ENCODE measurements at regions of chr10 and their contacts with region 1.

Region 1: DNA sequence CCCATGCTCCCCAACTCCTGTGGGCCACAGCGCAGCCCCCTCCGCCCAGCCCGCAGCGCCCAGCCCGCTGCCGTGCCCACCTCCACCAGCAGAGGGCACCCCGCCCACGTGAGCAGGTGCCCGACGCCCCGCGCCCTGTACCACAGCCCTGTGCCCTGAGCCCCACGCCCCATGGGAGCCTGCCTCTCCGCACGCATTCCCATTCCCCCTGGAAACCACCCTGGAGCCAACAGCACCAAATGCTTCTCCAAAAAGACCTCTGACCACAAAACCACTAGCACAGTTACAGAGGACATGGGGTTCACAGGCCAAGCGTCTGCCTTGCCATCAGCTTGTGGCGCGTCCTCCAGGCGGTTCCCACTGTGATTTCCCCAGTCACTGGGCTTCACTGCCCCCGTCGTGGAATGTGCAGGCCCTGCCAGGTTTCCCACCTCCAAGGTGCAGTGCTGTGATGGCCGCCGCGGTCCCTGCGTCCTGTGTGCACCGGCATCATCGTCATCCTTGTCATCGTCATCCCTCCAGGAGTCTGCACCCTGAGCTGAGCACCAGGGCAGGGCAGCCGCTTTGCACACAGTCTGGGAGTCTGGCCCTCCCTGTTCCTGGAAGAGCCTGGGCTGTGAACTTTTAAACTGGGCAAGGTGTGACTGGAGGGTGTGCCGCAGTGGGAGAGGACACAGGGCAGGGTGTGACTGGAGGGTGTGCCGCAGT is 61.7 kb downstream of the PWWP2B start:
- DNase-seq: peak; percentile 58 to 76 (median 70)
- ATAC-seq: peak; percentile 65 to 78 (median 76)
- H3K4me3 ChIP-seq: no peak overlapping the region
- H3K27ac ChIP-seq: no peak overlapping the region
- H3K4me1 ChIP-seq: peaks cover 0 to 16% (median 5%) of the 10 kb centered on the region in 4 donors
- H3K27me3 ChIP-seq: no peaks in the 10 kb centered on the region
- CTCF ChIP-seq: peak; percentile 90 to 95 (median 92)
- POLR2A ChIP-seq: no peak

Region 2: GRCh38 chr10:131960631-131961046 is 498.1 kb before region 1 on chr10:
- intact Hi-C with region 1: no loop called
- DNase-seq: no peak
- ATAC-seq: peak in 1 of 4 donors; percentile 13
- H3K4me3 ChIP-seq: no peak overlapping the region
- H3K27ac ChIP-seq: no peak overlapping the region
- H3K4me1 ChIP-seq: no peaks in the 10 kb centered on the region
- H3K27me3 ChIP-seq: no peaks in the 10 kb centered on the region
- CTCF ChIP-seq: no peak
- POLR2A ChIP-seq: no peak

Region 3: DNA sequence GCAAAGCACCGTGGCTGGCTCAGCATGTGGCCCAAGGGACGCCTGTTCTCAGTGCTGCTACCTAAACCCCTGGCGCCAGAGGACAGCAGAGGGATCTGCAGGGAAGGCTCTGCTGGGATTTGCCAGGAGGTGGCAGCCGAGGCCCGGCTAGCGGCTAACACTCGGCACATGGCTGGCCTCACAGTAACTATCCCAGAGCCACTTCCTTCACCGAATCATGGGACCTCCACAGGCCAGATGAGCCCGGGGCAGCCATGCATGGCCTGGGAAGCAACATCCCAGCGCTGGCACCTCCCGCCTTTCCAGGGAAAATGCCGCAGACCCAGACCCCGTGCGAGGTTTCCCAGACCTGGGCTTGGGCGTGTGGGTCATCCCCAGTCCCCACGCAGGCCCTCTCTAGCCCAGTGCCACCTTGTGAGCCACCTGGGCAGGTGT is 235.6 kb before region 1 on chr10:
- intact Hi-C with region 1: loop called (anchors 5 kb)
- DNase-seq: peak; percentile 80 to 84 (median 83)
- ATAC-seq: peak; percentile 93 to 99 (median 97)
- H3K4me3 ChIP-seq: no peak overlapping the region
- H3K27ac ChIP-seq: no peak overlapping the region
- H3K4me1 ChIP-seq: no peaks in the 10 kb centered on the region
- H3K27me3 ChIP-seq: no peaks in the 10 kb centered on the region
- CTCF ChIP-seq: peak; percentile 93 to 97 (median 94)
- POLR2A ChIP-seq: no peak

Region 4: DNA sequence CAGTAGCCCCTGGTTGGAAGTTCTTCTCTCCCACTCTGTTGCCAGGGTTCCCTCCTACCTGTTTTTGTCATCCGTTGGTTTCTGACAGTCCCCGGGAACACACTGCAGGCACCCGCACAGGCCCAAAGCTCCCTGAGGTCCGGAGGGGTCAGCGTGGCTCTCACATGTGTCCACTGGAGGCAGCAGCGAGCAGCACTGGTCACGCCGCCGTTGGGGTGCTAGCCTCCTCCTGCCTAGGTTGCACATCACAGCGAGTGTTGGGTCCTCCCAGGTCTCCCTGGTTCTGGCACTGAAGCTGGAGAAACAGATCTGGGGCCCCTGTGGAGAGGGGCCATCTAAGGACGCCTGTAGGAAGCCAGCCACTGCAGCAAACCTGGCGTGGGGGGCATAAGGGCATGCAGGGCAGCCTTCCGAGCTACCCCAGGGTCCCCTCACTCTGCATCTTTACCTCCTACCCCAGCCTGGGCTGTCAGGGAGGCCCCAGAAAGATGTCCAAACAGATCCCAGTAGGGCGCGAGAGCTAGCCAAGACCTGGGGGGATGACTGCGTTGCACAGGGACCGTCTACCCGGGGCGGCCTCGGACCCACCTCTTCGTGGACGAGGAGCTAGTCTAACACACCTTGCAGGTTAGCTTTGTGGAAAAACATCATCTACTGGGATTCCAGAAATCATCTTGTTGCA is 97.8 kb before region 1 on chr10:
- intact Hi-C with region 1: no loop called
- DNase-seq: peak in 1 of 3 donors; percentile 54
- ATAC-seq: peak; percentile 39 to 69 (median 52)
- H3K4me3 ChIP-seq: no peak overlapping the region
- H3K27ac ChIP-seq: no peak overlapping the region
- H3K4me1 ChIP-seq: no peaks in the 10 kb centered on the region
- H3K27me3 ChIP-seq: no peaks in the 10 kb centered on the region
- CTCF ChIP-seq: peak; percentile 14 to 55 (median 47)
- POLR2A ChIP-seq: no peak

Region 5: DNA sequence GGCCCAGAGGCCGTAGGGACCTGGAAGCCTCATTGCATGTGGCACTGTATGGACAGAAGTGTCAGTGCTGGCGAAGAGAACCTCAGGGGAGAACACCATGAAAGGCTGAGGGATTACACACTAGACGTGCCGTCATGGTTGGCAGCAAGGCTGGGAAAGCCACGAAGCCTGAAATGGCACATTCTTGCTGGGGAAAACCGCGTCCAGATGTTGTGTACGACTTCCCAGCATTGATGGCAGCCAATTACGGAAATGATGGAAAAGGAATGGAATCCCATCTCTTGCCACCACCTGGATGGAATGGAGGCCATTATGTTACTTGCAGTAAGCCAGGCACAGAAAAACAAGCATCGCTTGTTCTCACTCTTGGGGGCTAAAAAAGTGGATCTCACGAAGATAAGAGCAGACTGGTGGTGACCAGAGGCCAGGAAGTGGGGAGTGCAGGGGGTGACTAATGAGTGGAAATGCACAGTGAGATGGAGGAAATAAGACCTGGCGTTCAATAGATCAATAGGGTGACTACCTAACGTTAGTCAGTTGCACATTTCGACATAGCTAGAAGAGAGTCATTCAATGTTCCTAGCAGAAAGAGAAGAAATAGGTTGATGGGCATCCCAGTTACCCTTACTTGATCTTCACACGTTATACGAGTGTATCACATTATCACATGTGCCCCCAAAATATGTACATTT is 76.4 kb before region 1 on chr10:
- intact Hi-C with region 1: loop called in 1 of 2 experiments (anchors 5 kb)
- DNase-seq: peak in 1 of 3 donors; percentile 21
- ATAC-seq: no peak
- H3K4me3 ChIP-seq: no peak overlapping the region
- H3K27ac ChIP-seq: no peak overlapping the region
- H3K4me1 ChIP-seq: no peaks in the 10 kb centered on the region
- H3K27me3 ChIP-seq: no peaks in the 10 kb centered on the region
- CTCF ChIP-seq: no peak
- POLR2A ChIP-seq: no peak

Region 6: DNA sequence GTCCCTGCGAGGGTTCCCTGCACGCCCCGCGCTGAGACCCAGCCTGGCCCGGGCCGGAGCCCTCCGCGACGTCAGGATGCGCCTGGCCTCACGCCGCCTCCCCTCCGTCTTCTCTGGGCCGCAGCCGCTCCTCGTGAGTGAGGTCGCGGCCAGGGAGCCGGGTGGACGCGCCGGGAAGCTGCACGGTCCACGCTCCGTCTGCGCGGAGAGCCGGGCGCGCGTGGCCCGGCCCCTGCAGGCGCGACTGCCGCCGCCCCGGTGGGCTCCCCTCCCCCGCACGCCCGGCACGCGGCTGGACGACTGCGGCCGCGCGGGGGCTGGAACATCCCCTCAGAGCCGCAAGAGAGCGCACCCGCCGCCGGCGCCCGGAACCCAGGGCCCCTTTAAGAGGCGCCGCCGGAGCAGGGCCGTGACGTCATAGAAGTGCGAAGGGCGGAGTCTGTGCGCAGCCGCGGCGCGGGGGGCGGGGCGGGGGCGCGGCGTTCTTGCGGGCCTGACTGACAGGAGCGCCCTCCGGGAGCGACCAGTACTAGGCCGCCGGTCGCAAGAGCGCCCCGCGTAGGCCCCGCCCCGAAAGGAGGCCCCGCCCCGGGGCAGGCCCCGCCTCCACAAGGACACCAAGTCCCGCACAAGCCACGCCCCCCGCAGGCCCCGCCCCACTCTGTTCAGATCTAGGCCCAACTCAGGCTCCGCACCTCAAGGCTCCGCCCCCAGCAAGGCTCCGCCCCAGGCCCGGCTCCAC is 78.4 kb after region 1 on chr10:
- intact Hi-C with region 1: loop called in 1 of 2 experiments (anchors 10 kb)
- DNase-seq: peak; percentile 100
- ATAC-seq: peak; percentile 91 to 95 (median 91)
- H3K4me3 ChIP-seq: peak overlapping the region; percentile 62 to 70 (median 69)
- H3K27ac ChIP-seq: peak overlapping the region; percentile 66 to 80 (median 78)
- H3K4me1 ChIP-seq: peaks cover 0 to 34% (median 14%) of the 10 kb centered on the region in 4 donors
- H3K27me3 ChIP-seq: no peaks in the 10 kb centered on the region
- CTCF ChIP-seq: peak; percentile 29 to 39 (median 34)
- POLR2A ChIP-seq: peak; percentile 75

Region 7: GRCh38 chr10:132575356-132576201 is 116.8 kb after region 1 on chr10:
- intact Hi-C with region 1: loop called (anchors 5 kb)
- DNase-seq: peak in 2 of 3 donors; percentile 70 to 73
- ATAC-seq: peak; percentile 72 to 81 (median 76)
- H3K4me3 ChIP-seq: no peak overlapping the region
- H3K27ac ChIP-seq: peak overlapping the region in 2 of 3 donors; percentile 1 to 35
- H3K4me1 ChIP-seq: peaks cover 0 to 37% (median 17%) of the 10 kb centered on the region in 4 donors
- H3K27me3 ChIP-seq: no peaks in the 10 kb centered on the region
- CTCF ChIP-seq: no peak
- POLR2A ChIP-seq: no peak

Region 8: GRCh38 chr10:132637477-132638129 is 178.9 kb after region 1 on chr10:
- intact Hi-C with region 1: loop called (anchors 5 kb)
- DNase-seq: peak in 2 of 3 donors; percentile 16 to 18
- ATAC-seq: peak; percentile 72 to 92 (median 82)
- H3K4me3 ChIP-seq: no peak overlapping the region
- H3K27ac ChIP-seq: no peak overlapping the region
- H3K4me1 ChIP-seq: no peaks in the 10 kb centered on the region
- H3K27me3 ChIP-seq: no peaks in the 10 kb centered on the region
- CTCF ChIP-seq: peak; percentile 63 to 78 (median 64)
- POLR2A ChIP-seq: no peak

Region 9: GRCh38 chr10:132643709-132644526 is 185.2 kb after region 1 on chr10:
- intact Hi-C with region 1: loop called in 1 of 2 experiments (anchors 5 kb)
- DNase-seq: peak in 2 of 3 donors; percentile 32 to 46
- ATAC-seq: peak in 2 of 4 donors; percentile 6 to 11
- H3K4me3 ChIP-seq: no peak overlapping the region
- H3K27ac ChIP-seq: no peak overlapping the region
- H3K4me1 ChIP-seq: no peaks in the 10 kb centered on the region
- H3K27me3 ChIP-seq: no peaks in the 10 kb centered on the region
- CTCF ChIP-seq: no peak
- POLR2A ChIP-seq: no peak

Region 10: GRCh38 chr10:132685101-132685891 is 226.5 kb after region 1 on chr10:
- intact Hi-C with region 1: no loop called
- DNase-seq: peak; percentile 18 to 47 (median 39)
- ATAC-seq: peak in 1 of 4 donors; percentile 23
- H3K4me3 ChIP-seq: no peak overlapping the region
- H3K27ac ChIP-seq: no peak overlapping the region
- H3K4me1 ChIP-seq: no peaks in the 10 kb centered on the region
- H3K27me3 ChIP-seq: no peaks in the 10 kb centered on the region
- CTCF ChIP-seq: no peak
- POLR2A ChIP-seq: no peak

Measured in right lobe of liver (tissue), 6 donors.